ENCODE measurements at regions of chr2 and their contacts with region 1.

Region 1: GRCh38 chr2:120503793-120504571 is 158.0 kb downstream of the INHBB start:
- DNase-seq: peak; percentile 96 to 99
- ATAC-seq: peak; percentile 87 to 88
- H3K4me3 ChIP-seq: peak overlapping the region in 1 of 4 donors; percentile 12
- H3K27ac ChIP-seq: peak overlapping the region; percentile 92 to 97 (median 92)
- H3K4me1 ChIP-seq: peaks cover 25% of the 10 kb centered on the region in 2 donors
- H3K27me3 ChIP-seq: no peaks in the 10 kb centered on the region
- CTCF ChIP-seq: peak in 4 of 5 experiments; percentile 19 to 36 (median 22)
- POLR2A ChIP-seq: peak; percentile 40 to 51

Region 2: GRCh38 chr2:120470041-120470965 is 33.7 kb before region 1 on chr2:
- in situ Hi-C with region 1: no loop called
- intact Hi-C with region 1: loop called (anchors 1 kb)
- DNase-seq: peak; percentile 93 to 95
- ATAC-seq: peak; percentile 89 to 90
- H3K4me3 ChIP-seq: no peak overlapping the region
- H3K27ac ChIP-seq: peak overlapping the region; percentile 84 to 98 (median 93)
- H3K4me1 ChIP-seq: peaks cover 27 to 30% of the 10 kb centered on the region in 2 donors
- H3K27me3 ChIP-seq: no peaks in the 10 kb centered on the region
- CTCF ChIP-seq: no peak
- POLR2A ChIP-seq: peak in 1 of 2 donors; percentile 31

Region 3: DNA sequence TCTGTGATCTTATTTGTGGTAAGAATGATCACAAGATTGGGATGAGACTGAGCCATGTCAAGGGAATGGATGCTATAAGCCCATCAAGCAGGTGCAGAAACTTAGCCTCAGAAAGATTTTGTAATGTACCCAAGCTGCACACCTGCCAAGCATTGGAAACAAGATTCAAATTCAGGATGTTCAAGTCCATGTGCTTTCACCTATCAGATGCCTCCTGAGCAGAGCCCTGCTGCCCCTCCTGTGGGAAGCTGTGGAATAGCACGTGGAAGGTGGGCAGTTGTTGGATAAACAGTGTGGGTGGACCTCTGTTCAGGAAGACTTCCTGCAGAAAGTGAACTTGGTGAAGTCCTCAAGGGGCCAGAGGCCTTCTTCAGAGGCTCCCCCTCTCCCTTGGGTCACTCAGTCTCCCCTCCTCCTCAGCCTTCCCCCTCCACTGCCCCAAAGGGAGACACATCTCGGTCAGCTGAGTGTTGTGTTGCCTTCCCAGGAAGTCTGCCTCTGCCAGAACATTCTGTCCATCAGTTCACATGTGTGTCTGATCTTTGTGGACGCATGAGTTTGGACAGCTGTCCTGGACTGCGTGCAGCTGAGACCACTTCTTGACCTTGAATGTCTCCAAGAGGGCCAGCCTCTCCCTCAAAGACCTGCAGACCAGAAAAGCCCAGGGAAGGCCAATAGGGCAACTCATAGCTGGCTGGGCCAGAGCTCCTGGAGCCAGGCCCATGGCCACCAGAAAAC is 28.1 kb after region 1 on chr2:
- in situ Hi-C with region 1: no loop called
- intact Hi-C with region 1: loop called (anchors 1 kb)
- DNase-seq: peak; percentile 93 to 94
- ATAC-seq: peak; percentile 92 to 95
- H3K4me3 ChIP-seq: no peak overlapping the region
- H3K27ac ChIP-seq: peak overlapping the region; percentile 85 to 92 (median 88)
- H3K4me1 ChIP-seq: peaks cover 25 to 37% of the 10 kb centered on the region in 2 donors
- H3K27me3 ChIP-seq: no peaks in the 10 kb centered on the region
- CTCF ChIP-seq: peak in 3 of 5 experiments; percentile 10 to 27 (median 21)
- POLR2A ChIP-seq: peak; percentile 21 to 33

Region 4: GRCh38 chr2:120539937-120540718 is 36.1 kb after region 1 on chr2:
- in situ Hi-C with region 1: loop called in 1 of 4 experiments (anchors 5 kb)
- intact Hi-C with region 1: loop called (anchors 1 kb)
- DNase-seq: peak; percentile 96 to 98
- ATAC-seq: peak; percentile 73 to 78
- H3K4me3 ChIP-seq: peak overlapping the region in 1 of 4 donors; percentile 36
- H3K27ac ChIP-seq: peak overlapping the region; percentile 96 to 100 (median 98)
- H3K4me1 ChIP-seq: peaks cover 48 to 49% of the 10 kb centered on the region in 2 donors
- H3K27me3 ChIP-seq: no peaks in the 10 kb centered on the region
- CTCF ChIP-seq: no peak
- POLR2A ChIP-seq: peak; percentile 65 to 86

Region 5: DNA sequence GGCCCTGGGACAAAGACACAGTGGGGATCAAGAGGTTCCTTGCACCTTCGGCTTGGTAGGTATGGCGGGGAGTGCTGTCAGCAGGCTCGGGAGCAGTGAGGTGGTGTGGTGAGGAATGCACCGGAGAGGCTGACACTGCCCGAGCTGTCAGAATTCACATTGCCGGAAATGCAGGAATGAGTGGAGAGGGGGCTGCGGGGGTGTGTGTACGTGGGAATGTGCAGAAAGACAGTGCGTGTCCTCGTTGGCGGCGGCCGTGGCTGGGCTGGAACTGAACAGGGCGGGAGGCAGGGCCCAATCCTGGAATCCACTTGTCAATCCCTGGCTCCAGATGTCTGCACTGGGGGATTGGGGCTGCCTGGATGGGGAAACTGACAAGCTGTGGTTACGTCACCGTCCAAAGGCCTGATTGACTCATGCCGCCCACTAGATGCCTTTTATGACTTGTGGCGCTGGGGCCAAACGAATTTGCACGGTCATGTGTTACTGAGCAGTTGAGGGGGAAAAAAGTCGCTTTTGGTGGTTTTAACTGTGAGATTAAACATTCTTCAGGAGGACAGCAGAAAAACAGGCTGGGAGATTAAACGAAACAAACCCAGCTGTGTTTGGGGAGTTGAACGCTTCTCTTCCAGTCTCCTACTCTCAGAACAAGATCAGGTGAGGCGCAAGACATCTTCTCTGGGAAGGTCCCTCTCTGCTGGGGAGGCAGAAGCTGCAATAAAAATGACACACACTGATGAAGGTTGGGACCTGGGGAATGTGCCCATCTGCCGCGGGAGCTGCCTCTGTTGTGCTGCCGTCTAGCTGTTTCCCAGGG is 42.3 kb after region 1 on chr2:
- in situ Hi-C with region 1: loop called in 1 of 4 experiments (anchors 5 kb)
- intact Hi-C with region 1: loop called (anchors 1 kb)
- DNase-seq: peak; percentile 59 to 84
- ATAC-seq: no peak
- H3K4me3 ChIP-seq: no peak overlapping the region
- H3K27ac ChIP-seq: peak overlapping the region; percentile 6 to 83 (median 80)
- H3K4me1 ChIP-seq: peaks cover 38 to 52% of the 10 kb centered on the region in 2 donors
- H3K27me3 ChIP-seq: no peaks in the 10 kb centered on the region
- CTCF ChIP-seq: no peak
- POLR2A ChIP-seq: peak in 1 of 2 donors; percentile 13